ENCODE measurements at regions of chr9 and their contacts with region 1.

Region 1: DNA sequence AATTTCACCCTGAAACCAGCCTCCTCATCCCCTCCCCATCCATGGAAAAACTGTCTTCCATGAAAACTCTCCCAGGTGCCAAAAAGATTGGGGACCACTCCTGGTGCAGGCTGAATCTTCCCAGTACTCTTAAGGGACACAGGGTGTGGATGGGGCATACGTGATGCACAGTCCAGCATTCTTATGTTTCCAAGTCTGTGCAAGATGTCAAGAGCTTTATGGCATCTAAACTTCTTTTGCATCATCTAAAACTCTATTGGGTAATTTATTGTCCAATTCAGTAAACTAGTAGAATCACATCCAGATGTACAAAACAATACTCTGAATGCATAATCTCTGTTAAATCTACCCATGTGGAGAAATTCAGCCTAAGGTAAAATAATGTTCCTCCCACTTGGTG is 9.3 kb upstream of the FGD3 start:
- DNase-seq: no peak
- ATAC-seq: no peak
- H3K4me3 ChIP-seq: no peak overlapping the region
- H3K4me3 Mint-ChIP-seq: no peak overlapping the region
- H3K27ac ChIP-seq: no peak overlapping the region
- H3K27ac Mint-ChIP-seq: no peak overlapping the region
- H3K4me1 ChIP-seq: no peaks in the 10 kb centered on the region
- H3K4me1 Mint-ChIP-seq: no peaks in the 10 kb centered on the region
- H3K27me3 ChIP-seq: no peaks in the 10 kb centered on the region
- H3K27me3 Mint-ChIP-seq: no peaks in the 10 kb centered on the region
- CTCF ChIP-seq: no peak

Region 2: GRCh38 chr9:92887880-92888338 is 50.1 kb before region 1 on chr9:
- CTCF ChIA-PET with region 1: no interaction called
- POLR2A ChIA-PET with region 1: no interaction called
- intact Hi-C with region 1: loop called in 1 of 2 experiments (anchors 5 kb)
- DNase-seq: peak in 4 of 9 experiments; percentile 37 to 70 (median 48)
- ATAC-seq: peak; percentile 66
- H3K4me3 ChIP-seq: no peak overlapping the region
- H3K4me3 Mint-ChIP-seq: peak overlapping the region; percentile 67
- H3K27ac ChIP-seq: peak overlapping the region in 1 of 2 experiments; percentile 24
- H3K27ac Mint-ChIP-seq: peak overlapping the region; percentile 83
- H3K4me1 ChIP-seq: peaks cover 30% of the 10 kb centered on the region
- H3K4me1 Mint-ChIP-seq: peaks cover 47% of the 10 kb centered on the region
- H3K27me3 ChIP-seq: no peaks in the 10 kb centered on the region
- H3K27me3 Mint-ChIP-seq: no peaks in the 10 kb centered on the region
- CTCF ChIP-seq: no peak